HCT116 (cell line): ENCODE measurements at regions of chr10 and their contacts with region 1.

Region 1: DNA sequence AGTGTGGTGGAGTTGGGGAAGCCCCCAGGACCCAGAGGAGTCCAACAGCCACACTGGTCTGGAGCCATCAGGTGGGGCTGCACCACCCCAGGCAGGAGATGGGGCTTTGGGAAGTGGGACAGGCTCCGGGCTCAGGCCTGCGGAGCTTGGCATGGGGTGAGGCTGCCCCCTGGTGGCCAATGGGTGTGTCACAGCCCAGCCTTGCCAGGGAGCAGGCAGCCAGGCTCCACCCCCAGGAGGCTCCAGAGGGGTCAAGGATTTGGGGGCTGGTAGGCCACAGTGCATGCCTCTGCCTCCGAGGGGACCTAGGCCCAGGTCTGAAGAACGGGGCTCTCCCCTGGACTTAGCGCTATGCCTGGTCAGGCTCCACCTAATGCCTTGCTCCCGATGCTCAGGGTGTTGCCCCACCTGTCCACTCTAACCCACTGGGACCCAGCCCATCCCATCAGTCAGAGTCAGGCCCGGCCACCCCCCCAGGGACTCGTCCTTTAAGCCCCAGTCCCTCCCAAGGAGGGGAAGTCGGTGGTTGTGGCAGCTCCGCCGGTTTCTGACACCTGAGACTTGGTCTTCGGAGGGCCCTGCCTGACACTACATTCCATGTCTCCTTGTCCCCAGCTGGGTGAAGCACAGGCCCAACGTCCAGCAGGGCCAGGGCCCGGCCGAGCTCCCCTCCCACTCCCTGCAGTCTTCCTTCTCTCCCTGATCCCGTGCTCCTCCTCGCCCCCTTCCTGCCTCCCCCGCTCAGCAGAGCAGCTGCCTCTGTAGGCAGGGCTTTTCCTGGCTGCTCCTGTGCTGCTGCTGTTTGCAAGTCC is 11.3 kb upstream of the SAMD8 start:
- DNase-seq: peak; percentile 48
- ATAC-seq: peak; percentile 98
- H3K4me3 ChIP-seq: no peak overlapping the region
- H3K27ac ChIP-seq: no peak overlapping the region
- H3K4me1 ChIP-seq: no peaks in the 10 kb centered on the region
- H3K27me3 ChIP-seq: no peaks in the 10 kb centered on the region
- CTCF ChIP-seq: peak; percentile 87 to 96 (median 89)
- POLR2A ChIP-seq: no peak
- RAD21 ChIP-seq: peak; percentile 96

Region 2: GRCh38 chr10:74244097-74244685 is 856.0 kb before region 1 on chr10:
- CTCF ChIA-PET with region 1: interaction called, 13 read pairs
- POLR2A ChIA-PET with region 1: no interaction called
- RAD21 ChIA-PET with region 1: interaction called in 1 of 2 experiments, 3 read pairs
- intact Hi-C with region 1: loop called (anchors 1 kb)
- DNase-seq: peak; percentile 42
- ATAC-seq: no peak
- H3K4me3 ChIP-seq: no peak overlapping the region
- H3K27ac ChIP-seq: no peak overlapping the region
- H3K4me1 ChIP-seq: no peaks in the 10 kb centered on the region
- H3K27me3 ChIP-seq: no peaks in the 10 kb centered on the region
- CTCF ChIP-seq: peak; percentile 32 to 65 (median 60)
- POLR2A ChIP-seq: no peak
- RAD21 ChIP-seq: peak; percentile 73

Region 3: DNA sequence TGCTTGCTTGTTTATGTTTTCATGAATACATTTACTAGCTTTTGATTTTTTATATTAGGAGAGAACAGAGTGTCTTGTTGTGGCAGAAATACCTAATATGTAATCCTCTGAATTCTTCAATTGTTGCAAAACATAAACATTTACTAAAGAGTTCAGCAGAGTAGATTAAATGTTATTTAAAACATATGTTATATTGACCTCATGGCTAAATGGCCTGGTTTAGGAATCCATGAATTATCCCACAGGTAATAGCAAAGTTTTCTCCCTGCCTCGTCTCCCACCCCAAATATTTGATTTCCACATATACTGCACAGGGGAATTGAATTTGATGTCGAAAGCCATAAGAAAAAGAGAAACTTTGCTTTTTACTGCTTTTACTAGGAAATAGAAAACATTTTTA is 837.3 kb before region 1 on chr10:
- CTCF ChIA-PET with region 1: interaction called, 3 read pairs
- POLR2A ChIA-PET with region 1: no interaction called
- RAD21 ChIA-PET with region 1: no interaction called
- intact Hi-C with region 1: loop called (anchors 1 kb)
- DNase-seq: no peak
- ATAC-seq: no peak
- H3K4me3 ChIP-seq: no peak overlapping the region
- H3K27ac ChIP-seq: no peak overlapping the region
- H3K4me1 ChIP-seq: peaks cover 0 to 7% of the 10 kb centered on the region in 2 experiments; a peak in 1 of 4 replicates
- H3K27me3 ChIP-seq: no peaks in the 10 kb centered on the region
- CTCF ChIP-seq: no peak
- POLR2A ChIP-seq: no peak
- RAD21 ChIP-seq: no peak

Region 4: GRCh38 chr10:74419958-74420375 is 680.2 kb before region 1 on chr10:
- CTCF ChIA-PET with region 1: no interaction called
- POLR2A ChIA-PET with region 1: no interaction called
- RAD21 ChIA-PET with region 1: no interaction called
- intact Hi-C with region 1: loop called (anchors 10 kb)
- DNase-seq: peak; percentile 10
- ATAC-seq: peak; percentile 57; the same call in 1 of the 2 replicates
- H3K4me3 ChIP-seq: no peak overlapping the region
- H3K27ac ChIP-seq: no peak overlapping the region
- H3K4me1 ChIP-seq: peaks cover 0 to 7% of the 10 kb centered on the region in 2 experiments; a peak in 1 of 4 replicates
- H3K27me3 ChIP-seq: no peaks in the 10 kb centered on the region
- CTCF ChIP-seq: peak; percentile 32 to 65 (median 57); a peak in 5 of 6 replicates
- POLR2A ChIP-seq: no peak
- RAD21 ChIP-seq: peak; percentile 48